HCT116 (cell line): ENCODE measurements at regions of chr4 and their contacts with region 1.

Region 1: DNA sequence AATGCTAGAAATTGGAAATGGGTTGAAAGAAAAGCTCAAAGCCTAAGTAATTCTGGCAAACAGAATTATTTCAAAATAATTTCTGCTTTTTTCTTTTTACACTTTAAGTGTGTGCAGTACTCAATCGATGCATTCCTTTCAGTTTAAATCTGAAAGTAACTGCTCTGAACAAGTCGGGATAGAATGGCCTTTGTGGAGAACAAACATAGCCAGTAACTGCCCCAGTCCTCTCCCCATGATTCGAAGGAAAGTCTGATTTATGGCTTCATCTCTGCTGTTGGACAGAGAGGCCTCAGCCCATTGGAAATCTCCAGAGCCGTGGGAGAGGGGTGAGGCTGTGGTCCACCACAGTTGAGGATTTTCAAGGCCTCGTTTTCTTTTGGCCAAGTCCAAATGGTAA is 174.0 kb upstream of the TLL1 start:
- DNase-seq: no peak
- ATAC-seq: no peak
- H3K4me3 ChIP-seq: no peak overlapping the region
- H3K27ac ChIP-seq: no peak overlapping the region
- H3K4me1 ChIP-seq: no peaks in the 10 kb centered on the region
- H3K27me3 ChIP-seq: no peaks in the 10 kb centered on the region
- CTCF ChIP-seq: no peak
- POLR2A ChIP-seq: no peak
- RAD21 ChIP-seq: no peak

Region 2: DNA sequence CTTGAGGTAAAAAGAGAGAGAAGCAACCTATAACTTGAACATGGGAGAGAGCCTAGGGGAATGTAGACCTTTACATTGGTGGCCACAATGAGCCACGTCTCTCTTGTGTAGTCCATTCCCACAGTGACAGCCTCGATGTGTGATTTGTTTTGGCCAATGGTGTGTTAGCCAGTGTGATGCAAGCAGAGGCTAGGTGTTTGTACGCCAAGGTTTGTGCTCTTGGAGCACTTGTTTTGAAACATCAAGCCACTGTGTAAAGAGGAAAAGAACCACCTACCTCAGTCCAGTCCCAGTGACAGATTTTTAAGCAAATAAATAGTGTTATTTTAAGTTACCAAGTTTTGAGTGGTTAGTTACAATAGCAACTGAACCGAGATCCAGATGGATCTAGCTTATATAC is 562.5 kb before region 1 on chr4:
- CTCF ChIA-PET with region 1: no interaction called
- POLR2A ChIA-PET with region 1: no interaction called
- RAD21 ChIA-PET with region 1: no interaction called
- intact Hi-C with region 1: no loop called
- DNase-seq: no peak
- ATAC-seq: no peak
- H3K4me3 ChIP-seq: no peak overlapping the region
- H3K27ac ChIP-seq: no peak overlapping the region
- H3K4me1 ChIP-seq: no peaks in the 10 kb centered on the region
- H3K27me3 ChIP-seq: no peaks in the 10 kb centered on the region
- CTCF ChIP-seq: no peak
- POLR2A ChIP-seq: no peak
- RAD21 ChIP-seq: no peak

Region 3: GRCh38 chr4:165677081-165677480 is 22.0 kb before region 1 on chr4:
- CTCF ChIA-PET with region 1: no interaction called
- POLR2A ChIA-PET with region 1: no interaction called
- RAD21 ChIA-PET with region 1: no interaction called
- intact Hi-C with region 1: loop called (anchors 1 kb)
- DNase-seq: no peak
- ATAC-seq: no peak
- H3K4me3 ChIP-seq: no peak overlapping the region
- H3K27ac ChIP-seq: no peak overlapping the region
- H3K4me1 ChIP-seq: no peaks in the 10 kb centered on the region
- H3K27me3 ChIP-seq: no peaks in the 10 kb centered on the region
- CTCF ChIP-seq: no peak
- POLR2A ChIP-seq: no peak
- RAD21 ChIP-seq: no peak